A673 (cell line): ENCODE measurements at regions of chr2 and their contacts with region 1.

Region 1: GRCh38 chr2:1811258-1811970 is 67.1 kb upstream of the PXDN start:
- DNase-seq: peak; percentile 66
- H3K4me3 ChIP-seq: no peak overlapping the region
- H3K27ac ChIP-seq: peak overlapping the region; percentile 62
- H3K4me1 ChIP-seq: peaks cover 16% of the 10 kb centered on the region
- H3K27me3 ChIP-seq: no peaks in the 10 kb centered on the region
- CTCF ChIP-seq: no peak

Region 2: GRCh38 chr2:1750933-1751766 is 60.3 kb before region 1 on chr2:
- CTCF ChIA-PET with region 1: no interaction called
- POLR2A ChIA-PET with region 1: no interaction called
- intact Hi-C with region 1: loop called (anchors 5 kb)
- DNase-seq: peak; percentile 87
- H3K4me3 ChIP-seq: no peak overlapping the region
- H3K27ac ChIP-seq: no peak overlapping the region
- H3K4me1 ChIP-seq: no peaks in the 10 kb centered on the region
- H3K27me3 ChIP-seq: no peaks in the 10 kb centered on the region
- CTCF ChIP-seq: peak; percentile 89

Region 3: GRCh38 chr2:1868683-1869141 is 57.3 kb after region 1 on chr2:
- CTCF ChIA-PET with region 1: no interaction called
- POLR2A ChIA-PET with region 1: no interaction called
- intact Hi-C with region 1: no loop called
- DNase-seq: no peak
- H3K4me3 ChIP-seq: no peak overlapping the region
- H3K27ac ChIP-seq: no peak overlapping the region
- H3K4me1 ChIP-seq: peaks cover 41% of the 10 kb centered on the region
- H3K27me3 ChIP-seq: no peaks in the 10 kb centered on the region
- CTCF ChIP-seq: no peak